ENCODE measurements at regions of chr4 and their contacts with region 1.

Region 1: GRCh38 chr4:126223784-126224407 is 909.1 kb downstream of the FAT4 start:
- DNase-seq: peak; percentile 39
- H3K4me3 Mint-ChIP-seq: no peak overlapping the region
- H3K27ac Mint-ChIP-seq: no peak overlapping the region
- H3K4me1 Mint-ChIP-seq: no peaks in the 10 kb centered on the region
- H3K27me3 Mint-ChIP-seq: no peaks in the 10 kb centered on the region
- CTCF ChIP-seq: peak; percentile 62

Region 2: DNA sequence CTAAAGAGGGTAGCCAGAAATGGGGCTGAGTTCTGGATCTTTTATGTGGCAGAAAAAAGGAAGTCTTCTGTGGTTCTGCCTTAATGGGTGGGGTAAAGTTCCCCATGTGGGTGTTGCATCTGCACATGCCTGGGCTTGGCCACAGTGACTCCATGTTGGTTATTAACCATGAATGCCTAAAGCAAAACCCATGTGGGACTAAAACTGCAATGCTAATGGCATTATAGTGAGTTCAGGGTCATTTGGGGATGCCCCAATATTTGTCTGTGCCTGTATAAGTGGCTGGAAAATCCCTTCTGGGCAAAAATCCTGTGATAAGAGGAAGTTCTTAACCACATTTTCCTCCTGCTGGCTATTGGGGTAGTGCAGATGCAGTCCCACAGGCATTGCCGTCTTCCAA is 51.8 kb before region 1 on chr4:
- CTCF ChIA-PET with region 1: no interaction called
- POLR2A ChIA-PET with region 1: no interaction called
- intact Hi-C with region 1: no loop called
- DNase-seq: no peak
- H3K4me3 Mint-ChIP-seq: no peak overlapping the region
- H3K27ac Mint-ChIP-seq: no peak overlapping the region
- H3K4me1 Mint-ChIP-seq: peaks cover 6% of the 10 kb centered on the region
- H3K27me3 Mint-ChIP-seq: no peaks in the 10 kb centered on the region
- CTCF ChIP-seq: no peak

Region 3: GRCh38 chr4:126242679-126243390 is 18.9 kb after region 1 on chr4:
- CTCF ChIA-PET with region 1: no interaction called
- POLR2A ChIA-PET with region 1: no interaction called
- intact Hi-C with region 1: no loop called
- DNase-seq: no peak
- H3K4me3 Mint-ChIP-seq: no peak overlapping the region
- H3K27ac Mint-ChIP-seq: no peak overlapping the region
- H3K4me1 Mint-ChIP-seq: no peaks in the 10 kb centered on the region
- H3K27me3 Mint-ChIP-seq: no peaks in the 10 kb centered on the region
- CTCF ChIP-seq: no peak

Region 4: DNA sequence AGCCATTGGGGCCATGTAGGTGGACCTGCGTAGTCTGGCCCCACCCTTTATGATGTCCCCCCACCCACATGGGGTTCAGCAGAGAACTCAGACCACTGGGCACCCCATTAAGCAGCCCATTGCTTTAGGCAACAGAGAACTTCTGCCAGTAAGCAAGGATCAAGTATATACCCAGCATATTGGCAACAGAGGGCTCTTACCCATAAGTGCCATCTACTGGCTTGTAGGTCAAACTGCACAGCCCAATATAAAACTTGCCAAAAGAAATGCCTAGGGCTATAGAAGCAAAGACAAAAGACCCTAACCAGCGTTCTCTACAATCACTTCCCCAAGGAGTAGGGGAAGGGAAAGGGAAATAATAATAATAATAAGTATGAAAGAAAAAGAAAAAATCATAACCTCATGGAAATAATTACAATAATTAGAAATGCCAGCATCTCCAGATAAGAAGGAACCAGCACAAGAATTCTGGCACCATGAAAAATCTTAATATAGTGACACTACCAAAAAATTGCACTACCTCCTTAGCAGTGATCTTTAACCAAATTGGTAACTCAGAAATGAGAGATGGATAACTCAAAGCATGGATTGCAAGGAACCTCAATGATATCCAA is 181.6 kb after region 1 on chr4:
- CTCF ChIA-PET with region 1: interaction called, 3 read pairs
- POLR2A ChIA-PET with region 1: no interaction called
- intact Hi-C with region 1: loop called (anchors 1 kb)
- DNase-seq: peak; percentile 27
- H3K4me3 Mint-ChIP-seq: no peak overlapping the region
- H3K27ac Mint-ChIP-seq: no peak overlapping the region
- H3K4me1 Mint-ChIP-seq: no peaks in the 10 kb centered on the region
- H3K27me3 Mint-ChIP-seq: no peaks in the 10 kb centered on the region
- CTCF ChIP-seq: peak; percentile 48

Region 5: GRCh38 chr4:126583509-126583908 is 359.6 kb after region 1 on chr4:
- CTCF ChIA-PET with region 1: interaction called, 16 read pairs
- POLR2A ChIA-PET with region 1: no interaction called
- intact Hi-C with region 1: loop called (anchors 1 kb)
- DNase-seq: peak; percentile 44
- H3K4me3 Mint-ChIP-seq: no peak overlapping the region
- H3K27ac Mint-ChIP-seq: no peak overlapping the region
- H3K4me1 Mint-ChIP-seq: no peaks in the 10 kb centered on the region
- H3K27me3 Mint-ChIP-seq: no peaks in the 10 kb centered on the region
- CTCF ChIP-seq: peak; percentile 53